Common myeloid progenitor, CD34-positive (primary cell): ENCODE measurements at regions of chr10 and their contacts with region 1.

Region 1: DNA sequence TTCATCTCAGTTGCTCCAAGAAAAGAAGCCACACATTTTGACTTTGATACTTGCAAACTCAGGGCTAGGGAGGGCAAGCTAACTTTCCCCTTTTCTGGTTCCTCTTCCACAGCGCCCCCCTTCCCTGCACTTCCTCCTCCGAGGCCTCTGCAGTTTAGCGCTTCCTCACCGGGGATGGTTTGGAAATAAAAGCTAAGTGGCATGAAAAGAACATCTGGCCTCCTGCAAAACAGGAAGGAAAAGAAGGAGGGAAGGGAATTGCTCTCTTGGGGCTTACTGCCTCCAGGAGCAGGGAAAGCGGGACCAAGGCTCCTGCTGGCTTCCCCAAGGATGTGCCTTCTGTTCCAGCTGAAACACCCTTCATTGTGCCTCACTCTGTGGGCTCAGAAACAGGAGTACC is 42.3 kb downstream of the PRKCQ start:
- DNase-seq: peak in 2 of 3 donors; percentile 67 to 73
- H3K4me3 ChIP-seq: no peak overlapping the region
- H3K27ac ChIP-seq: no peak overlapping the region
- H3K4me1 ChIP-seq: peaks cover 5 to 28% (median 20%) of the 10 kb centered on the region in 4 experiments
- H3K27me3 ChIP-seq: no peaks in the 10 kb centered on the region

Region 2: DNA sequence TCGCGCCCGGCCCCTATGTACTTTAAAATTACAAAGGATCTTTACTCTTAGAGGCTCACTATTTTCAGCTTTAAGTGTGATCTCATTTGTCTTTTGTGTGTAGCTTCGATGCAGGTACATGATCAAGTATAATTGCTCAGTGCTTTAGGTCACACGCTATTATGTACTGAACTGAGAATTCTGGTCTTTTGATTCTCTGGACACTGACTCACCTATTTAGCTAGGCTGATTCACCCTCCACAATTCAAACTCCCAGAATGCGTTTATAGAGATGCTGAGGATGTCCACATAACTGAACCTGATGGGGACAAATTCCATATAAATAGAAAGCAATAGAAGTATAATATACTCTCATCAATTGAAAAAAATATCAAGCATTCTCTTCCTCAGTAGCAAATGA is 15.5 kb before region 1 on chr10:
- CTCF ChIA-PET with region 1: interaction called, 13 read pairs
- POLR2A ChIA-PET with region 1: no interaction called
- DNase-seq: no peak
- H3K4me3 ChIP-seq: no peak overlapping the region
- H3K27ac ChIP-seq: no peak overlapping the region
- H3K4me1 ChIP-seq: peaks cover 0 to 19% (median 4%) of the 10 kb centered on the region in 4 experiments
- H3K27me3 ChIP-seq: no peaks in the 10 kb centered on the region